SK-N-SH (cell line): ENCODE measurements at regions of chr17 and their contacts with region 1.

Region 1: GRCh38 chr17:47663912-47664625 is 14.3 kb downstream of the KPNB1 start:
- DNase-seq: peak; percentile 70
- H3K4me3 ChIP-seq: no peak overlapping the region; a peak in 1 of 4 replicates
- H3K27ac ChIP-seq: no peak overlapping the region
- H3K4me1 ChIP-seq: no peaks in the 10 kb centered on the region
- H3K27me3 ChIP-seq: no peaks in the 10 kb centered on the region
- CTCF ChIP-seq: peak; percentile 98
- EP300 ChIP-seq: no peak
- RAD21 ChIP-seq: peak; percentile 81

Region 2: GRCh38 chr17:47675380-47676198 is 11.5 kb after region 1 on chr17:
- CTCF ChIA-PET with region 1: interaction called, 167 read pairs
- POLR2A ChIA-PET with region 1: interaction called, 6 read pairs
- DNase-seq: no peak
- H3K4me3 ChIP-seq: no peak overlapping the region
- H3K27ac ChIP-seq: no peak overlapping the region
- H3K4me1 ChIP-seq: no peaks in the 10 kb centered on the region
- H3K27me3 ChIP-seq: no peaks in the 10 kb centered on the region
- CTCF ChIP-seq: no peak
- EP300 ChIP-seq: no peak
- RAD21 ChIP-seq: no peak

Region 3: GRCh38 chr17:47698749-47699535 is 34.9 kb after region 1 on chr17:
- CTCF ChIA-PET with region 1: interaction called, 58 read pairs
- POLR2A ChIA-PET with region 1: no interaction called
- DNase-seq: peak; percentile 98
- H3K4me3 ChIP-seq: no peak overlapping the region; a peak in 1 of 4 replicates
- H3K27ac ChIP-seq: no peak overlapping the region
- H3K4me1 ChIP-seq: peaks cover 5 to 10% of the 10 kb centered on the region in 2 experiments; a peak in 1 of 4 replicates
- H3K27me3 ChIP-seq: no peaks in the 10 kb centered on the region
- CTCF ChIP-seq: peak; percentile 100
- EP300 ChIP-seq: no peak
- RAD21 ChIP-seq: peak; percentile 78

Region 4: GRCh38 chr17:47733047-47733673 is 69.1 kb after region 1 on chr17 and contains the start of gene TBX21:
- CTCF ChIA-PET with region 1: interaction called, 46 read pairs
- POLR2A ChIA-PET with region 1: no interaction called
- DNase-seq: peak; percentile 93
- H3K4me3 ChIP-seq: peak within 1 kb of the TSS; percentile 25 to 31; a peak in 3 of 4 replicates
- H3K27ac ChIP-seq: no peak within 1 kb of the TSS
- H3K4me1 ChIP-seq: peaks cover 0 to 10% of the 10 kb centered on the region in 2 experiments; a peak in 1 of 4 replicates
- H3K27me3 ChIP-seq: peaks cover 87% of the 10 kb centered on the region
- CTCF ChIP-seq: peak; percentile 40
- EP300 ChIP-seq: no peak
- RAD21 ChIP-seq: 0 out of 2 replicates have a peak, but pooled peaks have one; percentile 16
- polyA plus RNA-seq, gene TBX21: not detected in 2 replicates

Region 5: GRCh38 chr17:47789611-47790561 is 125.8 kb after region 1 on chr17:
- CTCF ChIA-PET with region 1: interaction called, 29 read pairs
- POLR2A ChIA-PET with region 1: no interaction called
- DNase-seq: peak; percentile 96
- H3K4me3 ChIP-seq: peak overlapping the region; percentile 43 to 48
- H3K27ac ChIP-seq: 0 out of 4 replicates have a peak overlapping the region, but pooled peaks of 1 of the 2 experiments have one; percentile 2
- H3K4me1 ChIP-seq: peaks cover 0 to 5% of the 10 kb centered on the region in 2 experiments; a peak in 1 of 4 replicates
- H3K27me3 ChIP-seq: peaks cover 73% of the 10 kb centered on the region
- CTCF ChIP-seq: peak; percentile 62
- EP300 ChIP-seq: no peak
- RAD21 ChIP-seq: peak; percentile 81

Region 6: DNA sequence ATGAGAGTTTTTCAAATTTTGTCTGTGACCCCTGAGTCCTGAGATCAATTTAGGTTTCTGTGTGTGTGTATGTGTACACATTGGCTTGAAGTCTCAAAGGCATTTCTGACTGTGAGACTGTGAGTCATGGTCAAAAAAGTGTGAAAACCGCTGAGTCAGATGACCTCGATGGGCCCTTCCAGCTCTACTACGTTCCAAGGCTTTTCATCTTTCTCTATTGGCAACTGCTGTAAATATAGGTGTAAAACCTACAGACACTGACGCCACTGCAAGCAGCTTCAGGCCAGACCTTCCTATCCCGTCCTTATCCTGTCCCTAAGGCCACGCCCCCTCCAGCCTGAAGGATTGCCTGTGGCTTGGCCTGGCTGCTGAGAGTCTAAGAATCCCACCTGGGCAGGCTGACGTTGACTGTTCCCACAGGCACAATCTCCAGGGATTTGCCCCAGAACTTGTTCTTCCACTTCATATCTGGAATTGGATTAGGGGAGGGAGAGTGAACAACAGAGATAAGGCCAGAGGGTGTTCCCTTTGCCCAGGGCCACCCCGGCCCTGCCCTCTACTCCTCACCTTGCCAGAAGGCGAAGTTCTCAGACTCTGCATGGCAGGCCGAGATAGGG is 146.2 kb after region 1 on chr17:
- CTCF ChIA-PET with region 1: no interaction called
- POLR2A ChIA-PET with region 1: no interaction called
- DNase-seq: no peak
- H3K4me3 ChIP-seq: no peak overlapping the region
- H3K27ac ChIP-seq: peak overlapping the region in 1 of 2 experiments; percentile 52; a peak in 2 of 4 replicates
- H3K4me1 ChIP-seq: no peaks in the 10 kb centered on the region
- H3K27me3 ChIP-seq: no peaks in the 10 kb centered on the region
- CTCF ChIP-seq: no peak
- EP300 ChIP-seq: no peak
- RAD21 ChIP-seq: no peak